Psoas muscle (tissue), 8 donors: ENCODE measurements at regions of chr16 and their contacts with region 1.

Region 1: GRCh38 chr16:66483689-66484481 is 56.8 kb downstream of the BEAN1 start:
- DNase-seq: peak; percentile 77 to 87
- ATAC-seq: peak; percentile 67 to 84 (median 78)
- H3K4me3 ChIP-seq: no peak overlapping the region
- H3K27ac ChIP-seq: no peak overlapping the region
- H3K4me1 ChIP-seq: no peaks in the 10 kb centered on the region
- H3K27me3 ChIP-seq: no peaks in the 10 kb centered on the region
- CTCF ChIP-seq: peak; percentile 86

Region 2: GRCh38 chr16:66127459-66128370 is 356.2 kb before region 1 on chr16:
- intact Hi-C with region 1: no loop called
- DNase-seq: peak; percentile 21 to 64
- ATAC-seq: no peak
- H3K4me3 ChIP-seq: no peak overlapping the region
- H3K27ac ChIP-seq: no peak overlapping the region
- H3K4me1 ChIP-seq: no peaks in the 10 kb centered on the region
- H3K27me3 ChIP-seq: peaks cover 0 to 10% (median 0%) of the 10 kb centered on the region in 3 donors
- CTCF ChIP-seq: no peak

Region 3: DNA sequence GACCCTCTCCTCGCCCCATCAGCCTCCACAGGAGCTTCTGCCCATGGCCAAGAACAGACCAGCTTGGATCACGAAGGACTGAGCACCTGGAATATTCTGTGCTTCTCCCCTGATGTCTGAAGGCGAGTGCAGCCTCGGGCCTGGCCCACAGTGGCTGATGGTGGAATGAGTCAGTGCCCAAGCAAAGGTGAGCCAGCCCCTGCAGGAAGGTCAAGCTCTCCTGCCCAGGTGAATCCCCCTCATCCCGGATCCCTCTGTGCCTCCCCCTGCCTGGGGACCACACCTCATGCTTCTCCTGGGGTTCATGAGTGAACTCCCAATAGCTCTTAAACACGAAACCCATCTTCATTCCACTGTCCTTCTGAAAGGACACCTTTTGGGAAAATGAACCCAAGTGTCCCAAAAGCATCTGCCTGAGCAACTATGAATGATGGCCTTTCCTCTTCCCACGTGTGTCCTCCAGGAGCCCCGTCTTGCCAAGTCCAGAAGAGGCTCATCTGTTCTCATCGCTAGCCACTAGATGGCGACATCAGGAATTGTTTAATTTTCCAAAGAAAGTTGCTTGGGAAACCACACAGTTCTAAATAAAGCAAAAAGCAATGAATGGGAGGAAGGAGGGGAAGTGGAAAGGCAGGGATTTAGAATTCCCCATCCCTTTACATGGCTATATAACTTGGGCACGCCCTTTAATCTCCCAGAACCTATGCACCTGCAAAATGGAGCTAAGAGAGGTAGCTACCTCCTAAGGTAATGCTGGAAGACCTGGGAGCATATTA is 126.5 kb before region 1 on chr16:
- intact Hi-C with region 1: loop called in 1 of 2 experiments (anchors 2 kb)
- DNase-seq: no peak
- ATAC-seq: peak in 1 of 4 donors; percentile 61
- H3K4me3 ChIP-seq: no peak overlapping the region
- H3K27ac ChIP-seq: no peak overlapping the region
- H3K4me1 ChIP-seq: no peaks in the 10 kb centered on the region
- H3K27me3 ChIP-seq: peaks cover 0 to 26% (median 2%) of the 10 kb centered on the region in 3 donors
- CTCF ChIP-seq: peak; percentile 58

Region 4: DNA sequence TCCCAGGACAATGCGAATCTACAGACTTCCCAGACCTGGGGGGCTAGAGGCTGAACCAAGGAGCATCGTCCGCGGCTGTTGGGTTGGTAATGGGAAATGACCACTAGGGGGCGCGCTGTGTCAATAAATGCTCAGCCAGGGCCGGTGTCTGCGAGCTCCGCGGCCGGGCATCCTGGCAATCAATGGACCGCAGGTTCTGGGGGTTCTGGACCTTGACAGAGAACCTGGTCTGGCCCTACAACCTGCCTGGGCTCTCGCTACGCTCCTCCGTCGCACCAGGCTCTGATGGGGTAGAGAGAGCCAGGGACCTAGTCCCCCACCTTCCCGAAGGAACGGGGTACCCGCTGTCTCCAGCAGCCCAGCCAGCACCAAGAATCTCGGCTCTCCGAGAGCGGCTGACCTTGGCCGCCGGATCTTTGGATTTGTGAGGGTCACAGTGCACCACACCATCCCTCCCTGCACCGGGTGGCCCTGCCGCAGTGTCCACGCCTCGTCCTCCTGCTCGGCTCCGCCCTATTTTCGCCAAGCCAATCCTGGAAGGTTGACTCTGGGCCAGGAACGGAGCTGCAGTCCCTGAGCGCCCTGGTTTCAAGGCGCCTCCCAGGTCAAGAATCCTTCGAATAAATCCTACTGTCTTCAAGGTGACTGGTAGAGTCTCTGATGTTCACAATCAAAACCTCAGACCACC is 77.2 kb before region 1 on chr16:
- intact Hi-C with region 1: loop called (anchors 1 to 5 kb)
- DNase-seq: peak; percentile 85 to 91
- ATAC-seq: peak; percentile 88 to 97 (median 91)
- H3K4me3 ChIP-seq: peak overlapping the region; percentile 64
- H3K27ac ChIP-seq: no peak overlapping the region
- H3K4me1 ChIP-seq: no peaks in the 10 kb centered on the region
- H3K27me3 ChIP-seq: peaks cover 0 to 16% (median 0%) of the 10 kb centered on the region in 3 donors
- CTCF ChIP-seq: peak; percentile 89

Region 5: DNA sequence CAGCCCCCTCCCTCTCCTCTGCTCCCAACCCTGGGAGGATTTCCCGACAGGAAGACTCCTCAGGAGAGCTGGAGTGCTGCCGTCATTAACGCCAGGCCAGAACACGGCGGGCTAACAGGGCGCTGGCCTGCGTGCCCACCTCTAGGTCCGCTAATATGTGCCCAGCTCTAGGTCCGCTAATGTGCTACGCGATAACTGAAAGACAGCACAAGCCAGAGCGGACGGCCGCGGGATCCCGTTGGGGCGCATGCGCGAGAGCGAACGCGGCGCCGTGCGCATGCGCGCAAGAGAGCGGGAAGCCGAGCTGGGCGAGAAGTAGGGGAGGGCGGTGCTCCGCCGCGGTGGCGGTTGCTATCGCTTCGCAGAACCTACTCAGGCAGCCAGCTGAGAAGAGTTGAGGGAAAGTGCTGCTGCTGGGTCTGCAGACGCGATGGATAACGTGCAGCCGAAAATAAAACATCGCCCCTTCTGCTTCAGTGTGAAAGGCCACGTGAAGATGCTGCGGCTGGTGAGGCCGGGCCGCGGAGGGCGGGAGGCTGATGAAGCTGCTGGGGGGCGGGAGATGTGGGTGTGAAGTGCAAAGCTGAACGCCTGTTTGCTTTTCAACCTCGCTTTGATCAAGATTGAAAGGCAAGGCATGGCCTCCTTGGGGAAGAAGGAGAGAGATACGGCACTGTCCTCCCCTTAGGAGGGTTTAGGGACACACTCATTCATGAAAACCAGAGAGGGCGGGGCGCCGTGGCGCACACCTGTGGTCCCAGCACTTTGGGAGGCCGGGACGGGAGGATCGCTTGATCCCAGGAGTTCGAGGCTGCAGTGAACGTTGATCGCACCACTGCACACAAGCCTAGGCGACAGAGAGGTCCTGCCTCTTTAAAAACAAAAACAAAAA is 68.6 kb after region 1 on chr16 and contains the start of gene CKLF:
- intact Hi-C with region 1: loop called in 1 of 2 experiments (anchors 5 kb)
- DNase-seq: peak; percentile 89 to 95
- ATAC-seq: peak; percentile 85 to 91 (median 87)
- H3K4me3 ChIP-seq: peak within 1 kb of the TSS; percentile 68
- H3K27ac ChIP-seq: peak within 1 kb of the TSS; percentile 86
- H3K4me1 ChIP-seq: peaks cover 40% of the 10 kb centered on the region
- H3K27me3 ChIP-seq: no peaks in the 10 kb centered on the region
- CTCF ChIP-seq: no peak
- total RNA-seq, gene CKLF: 4.1 to 8.7 (median 6.4) TPM

Region 6: DNA sequence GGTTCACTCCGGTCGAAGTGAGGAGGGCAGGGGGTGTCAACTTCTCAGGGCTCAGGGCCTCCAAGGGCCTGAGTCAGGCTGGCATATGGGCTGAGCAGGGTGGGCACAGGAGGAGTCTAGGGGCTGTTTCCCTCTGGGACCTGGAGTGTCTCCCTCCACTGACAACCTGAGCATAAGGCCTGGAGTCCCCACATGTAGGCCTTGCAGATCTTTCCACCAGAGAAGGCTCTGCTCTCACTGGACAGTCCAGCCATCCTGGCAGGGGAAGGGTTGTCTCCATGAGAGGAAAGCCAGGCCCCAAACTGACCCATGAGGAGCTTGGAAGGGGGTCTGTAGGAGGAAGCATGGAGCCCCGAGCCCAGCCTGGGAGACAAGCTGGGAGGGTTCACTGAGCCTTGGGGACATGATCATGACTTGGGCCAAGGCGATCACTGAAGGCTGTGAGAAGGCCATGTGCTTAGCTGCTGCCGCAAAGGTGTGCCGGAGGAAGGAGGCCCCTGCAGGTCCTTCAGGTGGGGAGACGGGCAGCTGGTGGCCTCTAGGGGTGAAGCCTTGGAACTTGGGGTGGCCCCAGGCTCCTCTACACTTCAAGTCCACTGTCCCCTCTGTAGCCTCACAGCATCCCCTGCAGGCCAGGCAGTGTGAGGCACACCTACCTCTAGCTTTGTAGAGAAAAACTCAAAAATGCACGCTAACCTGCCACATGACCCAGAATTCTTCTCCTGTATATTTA is 105.3 kb after region 1 on chr16:
- intact Hi-C with region 1: loop called in 1 of 2 experiments (anchors 10 kb)
- DNase-seq: peak; percentile 36 to 70
- ATAC-seq: peak; percentile 46 to 76 (median 58)
- H3K4me3 ChIP-seq: no peak overlapping the region
- H3K27ac ChIP-seq: no peak overlapping the region
- H3K4me1 ChIP-seq: no peaks in the 10 kb centered on the region
- H3K27me3 ChIP-seq: no peaks in the 10 kb centered on the region
- CTCF ChIP-seq: peak; percentile 35

Region 7: DNA sequence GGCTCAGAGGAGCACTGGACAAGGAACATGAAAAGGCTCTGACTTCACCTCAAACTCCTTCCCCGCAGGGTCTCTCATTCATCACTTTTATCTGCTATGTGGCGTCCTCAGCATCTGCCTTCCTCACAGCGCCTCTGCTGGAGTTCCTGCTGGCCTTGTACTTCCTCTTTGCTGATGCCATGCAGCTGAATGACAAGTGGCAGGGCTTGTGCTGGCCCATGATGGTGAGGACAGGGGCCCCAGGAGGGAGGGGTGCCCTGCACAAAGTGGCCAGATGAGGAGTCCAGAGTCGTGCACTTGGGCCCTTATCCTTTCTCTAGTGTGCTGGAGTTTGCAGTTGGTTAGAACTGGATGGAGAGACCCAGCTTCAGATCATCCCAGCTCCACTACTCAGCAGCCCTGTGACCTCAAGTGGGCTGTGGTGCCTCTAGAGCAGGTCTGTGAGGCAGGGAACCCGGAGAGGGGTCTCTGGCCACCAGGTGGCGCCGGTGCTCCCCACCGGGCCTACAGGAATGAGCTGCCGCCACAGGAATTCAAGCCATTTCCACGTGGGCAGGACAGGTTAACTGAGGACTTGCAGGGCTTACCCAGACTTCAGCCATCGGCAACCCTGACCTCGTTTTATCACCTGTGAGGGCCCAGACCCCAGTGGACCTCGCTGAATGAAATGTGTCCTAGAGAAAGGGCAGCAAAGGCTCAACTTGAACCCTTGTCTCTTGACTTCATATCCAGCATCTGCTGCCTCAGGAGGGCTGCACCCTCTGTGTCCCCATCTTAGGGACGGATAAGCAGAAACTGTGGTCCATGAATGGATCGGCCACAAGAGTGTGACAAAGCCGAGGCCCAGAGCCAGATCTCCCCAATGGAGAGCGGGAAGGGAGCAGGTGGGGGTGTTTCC is 124.6 kb after region 1 on chr16:
- intact Hi-C with region 1: loop called in 1 of 2 experiments (anchors 10 kb)
- DNase-seq: peak; percentile 90 to 92
- ATAC-seq: peak; percentile 86 to 92 (median 90)
- H3K4me3 ChIP-seq: no peak overlapping the region
- H3K27ac ChIP-seq: no peak overlapping the region
- H3K4me1 ChIP-seq: no peaks in the 10 kb centered on the region
- H3K27me3 ChIP-seq: peaks cover 0 to 10% (median 7%) of the 10 kb centered on the region in 3 donors
- CTCF ChIP-seq: peak; percentile 92